ENCODE measurements at regions of chr17 and their contacts with region 1.

Region 1: DNA sequence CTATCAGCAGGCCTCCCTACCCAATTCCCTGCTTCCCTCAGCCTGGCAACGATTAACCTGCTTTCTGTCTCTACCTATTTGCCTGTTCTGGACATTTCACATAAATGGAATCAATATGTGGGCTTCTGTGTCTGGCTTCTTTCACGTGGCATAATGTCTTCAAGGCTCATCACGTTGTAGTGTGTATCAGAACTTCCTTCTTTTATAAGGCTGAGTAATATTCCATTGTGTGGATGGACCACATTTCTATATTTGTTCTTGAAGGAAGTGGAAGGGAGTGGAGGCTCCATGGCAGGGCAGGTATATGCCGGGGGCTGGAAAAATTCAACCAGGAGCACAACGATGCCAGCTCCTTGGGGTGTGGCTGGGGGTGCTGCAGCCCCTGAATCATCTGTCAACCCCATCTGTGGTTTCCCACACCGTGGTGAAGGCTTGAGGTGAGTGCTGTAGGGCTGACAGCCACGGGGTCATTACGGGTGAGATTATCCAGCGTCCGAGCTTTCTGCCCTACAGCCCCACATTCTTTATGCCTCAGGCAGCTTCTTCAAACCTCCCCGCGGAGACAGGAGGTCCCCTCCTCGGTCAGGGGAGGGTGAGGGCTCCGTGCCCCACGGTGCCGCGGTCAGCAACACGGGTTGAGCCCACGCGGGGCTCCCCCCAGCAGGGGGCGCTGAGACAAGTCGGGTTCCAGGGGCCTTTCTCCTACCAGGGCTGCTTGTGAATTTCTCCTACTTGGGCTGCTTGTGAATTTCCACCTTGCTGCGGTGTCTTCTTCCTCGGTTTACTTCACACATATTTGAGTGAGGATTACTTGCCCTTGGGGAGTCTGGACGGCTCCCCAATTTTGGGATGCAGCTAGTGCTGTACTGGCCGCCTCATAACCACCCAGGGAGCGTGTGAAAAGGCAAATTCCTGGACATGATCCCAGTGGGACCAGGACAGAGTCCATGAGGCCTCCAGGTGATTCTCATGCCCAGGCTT is 18.3 kb upstream of the WFIKKN2 start:
- DNase-seq: peak; percentile 59
- H3K4me3 Mint-ChIP-seq: no peak overlapping the region
- H3K27ac Mint-ChIP-seq: no peak overlapping the region
- H3K4me1 Mint-ChIP-seq: no peaks in the 10 kb centered on the region
- H3K27me3 Mint-ChIP-seq: no peaks in the 10 kb centered on the region

Region 2: GRCh38 chr17:50841949-50842354 is 24.9 kb after region 1 on chr17:
- CTCF ChIA-PET with region 1: interaction called, 4 read pairs
- intact Hi-C with region 1: loop called (anchors 1 kb)
- DNase-seq: peak; percentile 73
- H3K4me3 Mint-ChIP-seq: no peak overlapping the region
- H3K27ac Mint-ChIP-seq: no peak overlapping the region
- H3K4me1 Mint-ChIP-seq: peaks cover 3% of the 10 kb centered on the region
- H3K27me3 Mint-ChIP-seq: no peaks in the 10 kb centered on the region

Region 3: DNA sequence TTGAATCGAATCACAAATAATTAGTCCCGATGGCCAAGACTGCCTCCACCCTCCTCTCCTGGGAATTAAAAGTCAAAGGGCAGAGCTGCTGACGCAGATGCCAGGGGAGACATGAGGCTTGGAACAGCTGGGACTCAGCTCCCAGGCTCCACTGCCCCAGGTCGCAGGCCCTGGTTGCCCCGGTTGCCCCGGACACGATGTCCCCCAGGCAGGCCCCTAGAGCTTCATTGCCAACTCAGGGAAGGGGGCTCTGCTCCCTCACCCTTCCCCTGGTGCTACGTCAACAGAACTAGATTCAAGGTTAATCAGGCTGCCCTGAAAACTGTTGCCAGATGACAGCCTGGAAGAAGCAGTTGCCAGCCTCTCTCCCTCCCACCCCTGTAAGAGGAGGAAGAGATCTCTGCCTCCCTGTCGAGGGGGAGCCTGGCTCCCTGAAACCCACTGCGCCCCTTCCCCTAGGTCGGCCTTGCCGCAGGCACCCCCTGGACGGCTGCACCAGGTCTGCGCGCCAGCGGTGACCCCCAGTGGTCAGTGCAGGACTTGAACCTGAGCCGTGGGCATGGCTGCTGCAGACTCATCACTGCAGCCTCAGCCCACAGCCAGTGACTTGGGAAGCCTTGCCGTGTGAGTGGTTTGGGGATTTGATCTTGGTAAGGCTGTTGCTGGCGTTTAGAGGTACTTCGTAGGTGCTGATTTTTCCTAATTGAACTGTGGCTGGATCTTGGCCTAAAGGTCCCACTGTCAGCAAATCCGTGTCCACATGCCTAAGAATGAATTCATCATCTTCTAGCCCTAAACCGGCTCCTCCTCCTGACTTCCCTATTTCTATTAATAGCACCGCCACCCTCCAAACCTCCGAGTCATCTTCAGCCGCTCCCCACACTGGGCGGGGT is 133.2 kb after region 1 on chr17:
- CTCF ChIA-PET with region 1: interaction called, 15 read pairs
- intact Hi-C with region 1: no loop called
- DNase-seq: peak; percentile 80
- H3K4me3 Mint-ChIP-seq: no peak overlapping the region
- H3K27ac Mint-ChIP-seq: peak overlapping the region; percentile 53
- H3K4me1 Mint-ChIP-seq: peaks cover 26% of the 10 kb centered on the region
- H3K27me3 Mint-ChIP-seq: no peaks in the 10 kb centered on the region

Measured in activated naive CD4-positive, alpha-beta T cell treated with anti-CD3 and anti-CD28 coated beads for 36 hours (primary cell).